Left cardiac atrium (tissue), 4 donors: ENCODE measurements at regions of chr20 and their contacts with region 1.

Region 1: GRCh38 chr20:3820048-3820900 is at the start of gene AP5S1:
- DNase-seq: peak; percentile 98
- ATAC-seq: peak; percentile 93 to 94
- total RNA-seq, gene AP5S1: 11.8 to 14.7 TPM

Region 2: GRCh38 chr20:3781153-3781910 is 38.9 kb before region 1 on chr20 and contains the start of gene SPEF1:
- intact Hi-C with region 1: loop called (anchors 1 to 5 kb)
- DNase-seq: peak; percentile 75
- ATAC-seq: peak; percentile 72 to 74
- total RNA-seq, gene SPEF1: not detected

Region 3: GRCh38 chr20:3924304-3925112 is 104.2 kb after region 1 on chr20:
- intact Hi-C with region 1: no loop called
- DNase-seq: peak; percentile 51
- ATAC-seq: peak; percentile 21 to 64

Region 4: DNA sequence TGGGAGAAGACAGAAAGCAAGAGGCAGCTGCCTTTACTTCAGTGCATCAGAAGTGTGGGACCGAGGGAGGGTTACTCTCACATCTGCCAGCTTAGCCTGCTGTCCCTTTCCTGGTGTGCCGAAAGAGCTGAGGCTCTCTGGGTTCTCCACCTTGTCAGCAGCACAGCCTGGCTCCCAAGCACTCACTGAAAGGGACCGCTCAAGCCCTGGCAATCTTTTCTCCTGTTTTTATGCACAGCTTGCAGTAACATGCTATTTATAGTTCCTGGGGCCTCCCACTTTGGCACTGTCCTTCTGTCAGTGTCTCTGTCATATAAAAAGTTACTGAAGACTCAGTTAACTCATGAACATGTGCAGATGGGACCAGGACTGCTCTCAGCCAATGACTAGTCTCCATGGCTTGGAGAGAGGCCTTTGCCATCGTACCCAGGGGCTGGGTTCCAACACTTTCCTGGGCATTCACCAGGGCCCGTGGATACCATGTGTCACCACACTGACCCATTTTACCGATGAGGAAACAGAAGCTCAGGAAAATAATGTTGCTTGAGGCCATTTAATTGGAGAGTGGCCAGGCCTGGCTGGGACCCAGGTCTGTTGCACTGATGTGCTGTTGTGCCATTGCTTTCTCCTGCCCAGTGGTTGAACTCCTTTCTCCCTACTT is 115.2 kb after region 1 on chr20:
- intact Hi-C with region 1: no loop called
- DNase-seq: peak; percentile 54
- ATAC-seq: peak; percentile 77 to 90

Region 5: GRCh38 chr20:4082406-4083097 is 262.3 kb after region 1 on chr20:
- intact Hi-C with region 1: no loop called
- DNase-seq: peak; percentile 70
- ATAC-seq: peak; percentile 42 to 64